A549 (cell line): ENCODE measurements at regions of chr6 and their contacts with region 1.

Region 1: DNA sequence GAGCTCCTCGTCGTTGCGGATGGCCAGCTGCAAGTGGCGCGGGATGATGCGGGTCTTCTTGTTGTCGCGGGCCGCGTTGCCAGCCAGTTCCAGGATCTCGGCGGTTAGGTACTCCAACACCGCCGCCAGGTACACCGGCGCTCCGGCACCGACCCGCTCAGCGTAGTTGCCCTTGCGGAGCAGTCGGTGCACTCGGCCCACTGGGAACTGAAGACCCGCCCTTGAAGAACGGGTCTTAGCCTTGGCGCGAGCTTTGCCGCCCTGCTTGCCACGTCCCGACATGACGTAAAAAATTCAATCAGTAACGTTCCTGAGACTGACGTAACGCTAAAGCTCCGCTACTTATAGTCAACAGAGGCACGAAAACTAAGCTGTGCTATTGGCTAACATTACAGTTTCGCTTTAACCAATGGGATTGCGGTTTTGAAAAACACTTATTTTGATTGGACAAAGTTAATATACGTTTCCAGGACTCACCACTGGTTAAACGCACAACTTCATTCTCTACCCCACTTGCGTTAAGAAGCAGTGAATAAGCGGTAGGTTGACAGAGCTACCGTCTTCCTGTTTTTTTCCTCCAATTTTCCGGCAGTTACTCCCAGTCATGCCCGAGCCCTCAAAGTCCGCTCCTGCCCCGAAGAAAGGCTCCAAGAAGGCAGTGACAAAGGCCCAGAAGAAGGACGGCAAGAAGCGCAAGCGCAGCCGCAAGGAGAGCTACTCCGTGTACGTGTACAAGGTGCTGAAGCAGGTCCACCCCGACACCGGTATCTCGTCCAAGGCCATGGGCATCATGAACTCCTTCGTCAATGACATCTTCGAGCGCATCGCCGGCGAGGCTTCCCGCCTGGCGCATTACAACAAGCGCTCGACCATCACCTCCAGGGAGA is 73.9 kb downstream of the OR2B2 start:
- DNase-seq: peak; percentile 87 to 98
- ATAC-seq: peak; percentile 87 to 90
- H3K4me3 ChIP-seq: peak overlapping the region; percentile 84
- H3K27ac ChIP-seq: peak overlapping the region; percentile 97 to 99
- H3K4me1 ChIP-seq: peaks cover 23% of the 10 kb centered on the region
- CTCF ChIP-seq: no peak
- EP300 ChIP-seq: no peak
- POLR2A ChIP-seq: peak; percentile 71
- RAD21 ChIP-seq: no peak

Region 2: DNA sequence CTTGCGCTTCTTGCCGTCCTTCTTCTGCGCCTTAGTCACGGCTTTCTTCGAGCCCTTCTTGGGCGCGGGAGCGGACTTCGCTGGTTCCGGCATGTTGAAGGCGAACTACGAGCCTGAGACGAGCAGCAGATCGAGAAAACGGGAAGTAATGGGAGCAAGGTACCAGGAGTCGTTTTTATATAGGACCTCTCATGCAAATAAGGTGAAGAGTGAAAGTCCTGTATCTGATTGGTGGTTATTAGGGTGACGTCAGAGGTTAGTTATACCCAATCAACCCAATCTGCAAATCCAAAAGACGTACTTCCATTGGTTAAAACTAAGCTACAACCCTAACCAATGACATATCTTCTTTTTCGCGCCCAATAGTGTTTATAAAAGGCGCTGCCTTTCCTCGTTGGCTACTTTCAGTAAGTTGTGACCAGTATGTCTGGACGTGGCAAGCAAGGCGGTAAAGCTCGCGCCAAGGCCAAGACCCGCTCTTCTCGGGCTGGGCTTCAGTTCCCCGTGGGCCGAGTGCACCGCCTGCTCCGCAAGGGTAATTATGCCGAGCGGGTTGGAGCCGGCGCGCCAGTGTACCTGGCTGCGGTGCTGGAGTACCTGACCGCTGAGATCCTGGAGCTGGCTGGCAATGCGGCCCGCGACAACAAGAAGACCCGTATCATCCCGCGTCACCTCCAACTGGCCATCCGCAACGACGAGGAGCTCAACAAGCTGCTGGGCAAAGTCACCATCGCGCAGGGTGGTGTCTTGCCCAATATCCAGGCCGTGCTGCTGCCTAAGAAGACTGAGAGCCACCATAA is 691.4 kb before region 1 on chr6:
- CTCF ChIA-PET with region 1: no interaction called
- POLR2A ChIA-PET with region 1: interaction called, 13 read pairs
- DNase-seq: peak; percentile 96 to 99
- ATAC-seq: peak; percentile 82 to 84
- H3K4me3 ChIP-seq: peak overlapping the region; percentile 67
- H3K27ac ChIP-seq: peak overlapping the region; percentile 89 to 98
- H3K4me1 ChIP-seq: peaks cover 26% of the 10 kb centered on the region; the same call in 2 of the 3 replicates
- CTCF ChIP-seq: no peak
- EP300 ChIP-seq: no peak
- POLR2A ChIP-seq: peak; percentile 96
- RAD21 ChIP-seq: no peak

Region 3: DNA sequence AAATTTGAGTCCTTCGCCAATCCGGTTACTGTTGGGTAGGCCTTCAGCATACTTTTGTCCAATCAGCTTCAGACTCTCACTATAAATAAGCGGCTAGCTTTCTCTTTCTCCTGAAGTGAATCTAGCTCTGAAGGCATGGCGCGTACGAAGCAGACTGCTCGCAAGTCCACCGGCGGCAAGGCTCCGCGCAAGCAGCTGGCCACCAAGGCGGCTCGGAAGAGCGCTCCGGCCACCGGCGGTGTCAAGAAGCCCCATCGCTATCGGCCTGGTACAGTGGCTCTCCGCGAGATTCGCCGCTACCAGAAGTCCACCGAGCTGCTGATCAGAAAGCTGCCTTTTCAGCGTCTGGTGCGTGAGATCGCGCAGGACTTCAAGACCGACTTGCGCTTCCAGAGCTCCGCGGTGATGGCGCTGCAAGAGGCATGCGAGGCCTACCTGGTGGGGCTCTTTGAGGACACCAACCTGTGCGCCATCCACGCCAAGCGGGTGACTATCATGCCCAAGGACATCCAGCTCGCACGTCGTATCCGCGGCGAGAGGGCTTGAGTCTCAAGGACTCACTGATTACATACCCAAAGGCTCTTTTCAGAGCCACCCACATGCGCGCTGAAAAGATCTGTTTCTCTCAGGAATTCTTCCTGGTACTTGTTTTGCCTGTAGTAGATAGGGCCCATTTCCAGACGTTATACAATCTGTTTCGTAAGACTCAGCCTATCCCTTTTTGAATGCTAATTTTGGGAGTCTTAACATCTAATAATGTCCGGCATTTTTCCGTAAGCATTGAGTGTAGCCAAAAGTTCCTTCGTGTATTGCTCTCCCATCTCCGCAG is 28.1 kb before region 1 on chr6:
- CTCF ChIA-PET with region 1: no interaction called
- POLR2A ChIA-PET with region 1: interaction called, 125 read pairs
- DNase-seq: peak; percentile 80 to 95
- ATAC-seq: peak; percentile 58 to 59
- H3K4me3 ChIP-seq: peak overlapping the region; percentile 53
- H3K27ac ChIP-seq: peak overlapping the region; percentile 83 to 99
- H3K4me1 ChIP-seq: peaks cover 28% of the 10 kb centered on the region; the same call in 2 of the 3 replicates
- CTCF ChIP-seq: no peak
- EP300 ChIP-seq: no peak
- POLR2A ChIP-seq: peak; percentile 97
- RAD21 ChIP-seq: no peak

Region 4: GRCh38 chr6:27825025-27825793 is 13.1 kb before region 1 on chr6:
- CTCF ChIA-PET with region 1: interaction called, 3 read pairs
- POLR2A ChIA-PET with region 1: interaction called, 15 read pairs
- DNase-seq: no peak
- ATAC-seq: peak in 1 of 2 experiments; percentile 10; a peak in 2 of 6 replicates
- H3K4me3 ChIP-seq: peak overlapping the region; percentile 45
- H3K27ac ChIP-seq: peak overlapping the region; percentile 66 to 85
- H3K4me1 ChIP-seq: no peaks in the 10 kb centered on the region
- CTCF ChIP-seq: no peak
- EP300 ChIP-seq: no peak
- POLR2A ChIP-seq: no peak
- RAD21 ChIP-seq: no peak

Region 5: GRCh38 chr6:27851440-27851839 is 13.1 kb after region 1 on chr6:
- CTCF ChIA-PET with region 1: no interaction called
- POLR2A ChIA-PET with region 1: interaction called, 10 read pairs
- DNase-seq: no peak
- ATAC-seq: no peak
- H3K4me3 ChIP-seq: no peak overlapping the region
- H3K27ac ChIP-seq: no peak overlapping the region
- H3K4me1 ChIP-seq: no peaks in the 10 kb centered on the region
- CTCF ChIP-seq: no peak
- EP300 ChIP-seq: no peak
- POLR2A ChIP-seq: no peak
- RAD21 ChIP-seq: no peak

Region 6: DNA sequence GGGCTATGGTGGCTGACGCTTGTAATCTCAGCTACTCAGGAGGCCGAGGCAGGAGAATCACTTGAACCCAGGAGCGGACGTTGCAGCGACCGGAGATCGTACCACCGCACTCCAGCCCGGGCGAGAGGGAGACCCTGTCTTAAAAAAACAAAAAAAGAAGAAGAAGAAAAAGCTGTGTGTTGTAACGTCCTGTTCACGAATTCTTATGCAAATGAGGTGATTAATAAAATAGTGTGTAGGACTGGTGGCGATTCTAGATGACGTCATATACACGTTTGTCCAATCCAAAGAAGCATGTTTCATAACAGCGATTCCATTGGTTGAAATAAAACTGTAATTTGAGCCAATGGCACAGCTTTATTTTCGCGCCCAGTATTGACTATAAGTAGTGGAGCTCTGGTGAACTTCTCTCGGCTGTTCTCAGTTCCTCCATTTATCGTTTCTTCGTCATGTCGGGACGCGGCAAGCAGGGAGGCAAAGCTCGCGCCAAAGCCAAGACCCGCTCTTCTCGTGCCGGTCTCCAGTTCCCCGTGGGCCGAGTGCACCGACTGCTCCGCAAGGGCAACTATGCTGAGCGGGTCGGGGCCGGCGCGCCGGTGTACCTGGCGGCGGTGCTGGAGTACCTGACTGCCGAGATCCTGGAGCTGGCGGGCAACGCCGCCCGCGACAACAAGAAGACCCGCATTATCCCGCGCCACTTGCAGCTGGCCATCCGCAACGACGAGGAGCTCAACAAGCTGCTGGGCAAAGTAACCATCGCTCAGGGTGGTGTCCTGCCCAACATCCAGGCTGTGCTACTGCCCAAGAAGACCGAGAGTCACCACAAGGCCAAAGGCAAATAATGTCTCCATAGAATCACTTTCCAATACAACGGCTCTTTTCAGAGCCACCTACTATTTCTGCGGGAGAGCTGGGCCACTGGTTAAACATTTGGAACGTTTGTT is 26.9 kb after region 1 on chr6:
- CTCF ChIA-PET with region 1: interaction called, 11 read pairs
- POLR2A ChIA-PET with region 1: interaction called, 94 read pairs
- DNase-seq: peak; percentile 78 to 87
- ATAC-seq: peak; percentile 72 to 80
- H3K4me3 ChIP-seq: peak overlapping the region; percentile 52
- H3K27ac ChIP-seq: peak overlapping the region; percentile 74 to 81
- H3K4me1 ChIP-seq: 0 out of 3 replicates have a peak, but pooled peaks cover 4% of the 10 kb centered on the region
- CTCF ChIP-seq: no peak
- EP300 ChIP-seq: no peak
- POLR2A ChIP-seq: peak; percentile 32; the same call in 1 of the 2 replicates
- RAD21 ChIP-seq: no peak

Region 7: GRCh38 chr6:27871924-27872638 is 33.8 kb after region 1 on chr6:
- CTCF ChIA-PET with region 1: interaction called, 11 read pairs
- POLR2A ChIA-PET with region 1: interaction called, 94 read pairs
- DNase-seq: peak; percentile 59 to 90
- ATAC-seq: peak; percentile 84 to 86
- H3K4me3 ChIP-seq: peak overlapping the region; percentile 52
- H3K27ac ChIP-seq: peak overlapping the region; percentile 78 to 90
- H3K4me1 ChIP-seq: 0 out of 3 replicates have a peak, but pooled peaks cover 7% of the 10 kb centered on the region
- CTCF ChIP-seq: no peak
- EP300 ChIP-seq: no peak
- POLR2A ChIP-seq: peak; percentile 81
- RAD21 ChIP-seq: no peak